ENCODE measurements at regions of chr19 and their contacts with region 1.

Region 1: DNA sequence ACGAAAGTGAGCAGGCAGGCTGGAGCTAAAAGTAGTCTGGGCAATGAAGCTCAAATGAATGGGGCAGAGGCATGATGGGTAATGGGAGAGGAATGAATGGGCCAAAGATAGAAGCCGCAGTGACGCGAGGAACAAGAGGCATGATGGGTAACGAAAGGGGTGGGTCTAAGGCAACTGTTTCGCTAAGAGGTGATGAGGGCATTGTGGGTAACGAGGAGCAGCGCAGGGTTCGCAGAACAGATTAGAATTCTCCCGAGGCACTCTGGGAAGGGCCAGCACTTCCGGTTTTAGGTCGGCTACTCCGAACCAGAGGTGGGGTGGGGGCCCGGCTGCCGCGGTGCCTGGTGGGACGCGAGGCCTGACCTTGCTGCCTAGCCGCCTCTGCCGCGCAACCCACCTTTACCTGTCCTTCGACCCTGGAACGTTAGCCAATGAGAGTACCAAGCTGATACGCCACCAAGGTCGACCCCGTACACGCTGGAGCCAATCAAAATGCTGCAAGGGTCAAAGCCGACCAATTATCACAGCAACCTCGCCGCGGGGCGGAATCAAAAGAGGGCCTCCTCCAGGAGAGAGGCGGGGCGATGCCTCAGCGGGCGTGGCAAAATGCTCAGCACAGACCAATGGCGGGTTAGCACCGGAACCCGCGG is 563 bp upstream of the TOMM40 start:
- DNase-seq: peak; percentile 96

Region 2: GRCh38 chr19:44845612-44846454 is 44.7 kb before region 1 on chr19 and contains the start of gene NECTIN2:
- CTCF ChIA-PET with region 1: interaction called, 5 read pairs
- POLR2A ChIA-PET with region 1: interaction called, 19 read pairs
- DNase-seq: peak; percentile 99

Region 3: DNA sequence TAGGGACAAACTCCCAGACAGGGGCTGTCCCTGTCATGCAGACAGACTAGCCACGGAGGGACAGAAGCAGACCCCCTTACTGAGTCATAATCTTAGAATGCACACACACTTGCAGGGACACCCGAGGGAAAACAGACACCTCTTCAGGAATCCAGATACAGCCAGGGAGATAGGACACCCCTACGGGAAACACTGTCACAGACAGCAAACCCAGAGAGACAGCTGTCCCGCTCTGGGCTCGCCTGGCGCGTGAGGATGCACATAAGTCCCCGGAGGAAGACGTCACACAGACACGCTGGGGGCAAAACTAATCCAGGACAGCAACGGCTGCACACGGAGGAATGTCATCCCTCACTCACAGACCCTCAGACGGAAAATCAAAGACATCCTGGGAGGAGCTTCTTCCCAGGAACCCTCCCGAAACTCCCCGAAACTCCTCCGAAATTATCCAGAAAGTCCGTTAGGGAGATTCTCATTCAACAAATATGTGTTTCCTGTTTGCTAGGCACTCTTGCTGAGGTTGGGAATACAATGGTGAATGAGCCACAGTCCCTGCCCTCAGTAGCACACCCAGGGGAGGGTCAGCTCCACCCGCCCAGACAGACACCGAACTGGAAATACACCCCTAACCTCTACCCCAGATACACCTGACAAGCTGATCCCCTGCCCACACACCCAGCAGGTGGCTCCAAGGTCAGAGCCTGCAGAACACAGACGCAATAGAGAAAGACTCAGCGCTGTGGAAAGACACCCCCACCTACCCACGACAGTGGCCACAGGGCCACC is 14.6 kb before region 1 on chr19:
- CTCF ChIA-PET with region 1: no interaction called
- POLR2A ChIA-PET with region 1: interaction called, 15 read pairs
- DNase-seq: no peak